ENCODE measurements at regions of chr15 and their contacts with region 1.

Region 1: GRCh38 chr15:99708556-99708955 is 24.7 kb downstream of the LYSMD4 start:
- DNase-seq: peak; percentile 93

Region 2: GRCh38 chr15:99282121-99282520 is 426.4 kb before region 1 on chr15:
- intact Hi-C with region 1: loop called in 1 of 2 experiments (anchors 5 kb)
- DNase-seq: no peak

Region 3: GRCh38 chr15:99755692-99756409 is 47.3 kb after region 1 on chr15:
- intact Hi-C with region 1: no loop called
- DNase-seq: no peak